Heart left ventricle (tissue), 16 donors: ENCODE measurements at regions of chr10 and their contacts with region 1.

Region 1: GRCh38 chr10:93386631-93387369 is 95.3 kb downstream of the MYOF start:
- DNase-seq: peak in 3 of 5 donors; percentile 18 to 34 (median 21)
- ATAC-seq: peak in 3 of 4 donors; percentile 34 to 44 (median 44)
- H3K4me3 ChIP-seq: peak overlapping the region in 4 of 12 donors; percentile 4 to 22 (median 12)
- H3K27ac ChIP-seq: peak overlapping the region; percentile 18 to 86 (median 62)
- H3K4me1 ChIP-seq: peaks cover 0 to 68% (median 11%) of the 10 kb centered on the region in 12 donors
- H3K27me3 ChIP-seq: no peaks in the 10 kb centered on the region
- CTCF ChIP-seq: peak in 1 of 12 donors; percentile 17
- POLR2A ChIP-seq: no peak

Region 2: DNA sequence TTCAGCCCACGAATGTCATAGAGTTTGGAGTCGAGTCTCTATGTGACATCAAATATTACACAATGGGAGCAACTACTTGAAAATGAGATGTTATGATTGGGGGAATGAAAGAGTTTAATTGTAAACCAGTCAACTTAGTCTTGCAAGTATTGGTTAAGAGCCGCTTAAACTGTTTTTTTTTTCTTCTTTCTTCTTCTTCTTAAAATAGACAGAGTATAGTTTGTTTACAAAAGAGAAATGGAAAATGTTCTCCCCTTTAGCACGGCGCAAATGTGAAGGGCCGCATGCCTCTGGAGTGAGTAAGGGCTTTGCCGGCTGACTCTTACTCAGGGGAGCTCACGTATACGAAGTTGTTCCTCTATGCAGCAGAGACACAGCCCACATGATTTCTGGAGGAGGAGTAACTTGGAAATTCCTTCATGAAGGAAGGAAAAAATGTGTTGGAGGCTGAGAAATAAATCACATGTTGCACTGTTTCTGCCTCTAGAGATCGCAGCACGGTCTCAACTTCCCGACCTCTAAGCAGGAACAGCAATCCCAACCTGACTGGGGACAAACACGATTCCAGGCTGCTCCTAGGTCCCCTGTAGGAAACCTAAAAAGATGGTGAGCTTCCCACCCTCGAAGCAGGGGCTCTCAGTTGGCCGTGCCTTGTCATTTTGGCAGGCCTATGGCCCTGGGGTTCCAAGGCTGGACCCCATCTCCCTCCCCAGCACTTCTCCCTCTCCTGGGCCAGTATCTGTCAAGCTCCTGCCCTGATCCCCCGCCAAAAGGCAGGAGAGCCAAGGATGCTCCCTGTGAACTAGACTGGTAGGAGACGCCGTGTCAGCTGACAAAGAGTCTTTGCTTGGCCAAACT is 50.5 kb after region 1 on chr10:
- intact Hi-C with region 1: loop called in 1 of 10 experiments (anchors 5 kb)
- DNase-seq: peak in 4 of 5 donors; percentile 83 to 87 (median 85)
- ATAC-seq: peak; percentile 95 to 96 (median 96)
- H3K4me3 ChIP-seq: peak overlapping the region in 8 of 12 donors; percentile 3 to 36 (median 30)
- H3K27ac ChIP-seq: peak overlapping the region; percentile 82 to 99 (median 98)
- H3K4me1 ChIP-seq: peaks cover 0 to 85% (median 48%) of the 10 kb centered on the region in 12 donors
- H3K27me3 ChIP-seq: no peaks in the 10 kb centered on the region
- CTCF ChIP-seq: no peak
- POLR2A ChIP-seq: no peak

Region 3: GRCh38 chr10:93471110-93471651 is 84.4 kb after region 1 on chr10:
- intact Hi-C with region 1: loop called in 1 of 10 experiments (anchors 5 kb)
- DNase-seq: no peak
- ATAC-seq: peak in 2 of 4 donors; percentile 19 to 64
- H3K4me3 ChIP-seq: no peak overlapping the region
- H3K27ac ChIP-seq: peak overlapping the region in 7 of 12 donors; percentile 12 to 83 (median 32)
- H3K4me1 ChIP-seq: peaks cover 0 to 66% (median 25%) of the 10 kb centered on the region in 12 donors
- H3K27me3 ChIP-seq: no peaks in the 10 kb centered on the region
- CTCF ChIP-seq: no peak
- POLR2A ChIP-seq: no peak

Region 4: DNA sequence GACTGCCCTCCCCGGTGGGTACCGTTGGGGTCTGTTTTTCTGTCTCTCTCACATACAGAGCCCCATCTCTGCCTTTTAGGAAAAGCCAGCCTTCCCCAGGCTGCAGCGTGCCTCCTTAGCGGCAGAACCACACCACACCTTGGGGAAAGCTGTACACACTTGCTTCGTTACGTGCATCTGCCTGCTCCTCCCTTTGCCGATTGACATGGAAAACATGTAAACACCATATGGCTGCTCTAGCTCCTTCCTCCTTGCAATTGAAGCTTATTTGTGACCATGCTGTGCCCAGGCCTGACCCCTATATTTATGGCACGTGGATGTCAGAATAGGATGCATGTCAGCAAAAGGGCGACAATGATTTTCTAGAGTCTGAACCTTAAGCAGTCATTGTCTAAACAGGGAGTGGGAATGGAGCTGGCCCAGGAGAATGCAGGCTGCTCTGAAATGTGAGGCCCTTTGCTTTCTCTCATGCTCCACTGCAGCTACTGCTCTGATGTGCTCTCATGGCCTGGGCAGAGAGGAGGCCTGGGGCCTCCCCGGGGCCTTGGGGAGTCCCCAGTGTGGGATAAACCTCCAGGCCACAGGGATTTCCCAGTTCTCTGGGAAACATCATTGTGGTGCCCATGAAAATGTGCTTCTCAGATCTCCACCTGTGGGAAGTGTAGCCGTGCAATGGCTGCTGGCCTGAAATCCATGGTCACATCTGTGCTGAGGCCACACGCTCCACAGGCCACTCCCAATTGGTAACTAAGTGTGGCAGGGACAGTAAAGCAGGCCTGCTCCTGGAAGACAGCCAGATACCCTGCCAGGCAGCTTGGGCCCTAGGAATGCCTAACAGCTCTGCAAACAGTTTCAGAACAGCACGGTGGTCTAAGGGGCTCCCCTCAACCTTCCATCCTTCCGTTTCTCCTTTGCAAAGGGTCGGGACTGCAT is 244.1 kb after region 1 on chr10:
- intact Hi-C with region 1: no loop called
- DNase-seq: no peak
- ATAC-seq: no peak
- H3K4me3 ChIP-seq: no peak overlapping the region
- H3K27ac ChIP-seq: no peak overlapping the region
- H3K4me1 ChIP-seq: no peaks in the 10 kb centered on the region
- H3K27me3 ChIP-seq: peaks cover 0 to under 1% (median 0%) of the 10 kb centered on the region in 9 donors
- CTCF ChIP-seq: no peak
- POLR2A ChIP-seq: no peak